ENCODE measurements at regions of chr10 and their contacts with region 1.

Region 1: DNA sequence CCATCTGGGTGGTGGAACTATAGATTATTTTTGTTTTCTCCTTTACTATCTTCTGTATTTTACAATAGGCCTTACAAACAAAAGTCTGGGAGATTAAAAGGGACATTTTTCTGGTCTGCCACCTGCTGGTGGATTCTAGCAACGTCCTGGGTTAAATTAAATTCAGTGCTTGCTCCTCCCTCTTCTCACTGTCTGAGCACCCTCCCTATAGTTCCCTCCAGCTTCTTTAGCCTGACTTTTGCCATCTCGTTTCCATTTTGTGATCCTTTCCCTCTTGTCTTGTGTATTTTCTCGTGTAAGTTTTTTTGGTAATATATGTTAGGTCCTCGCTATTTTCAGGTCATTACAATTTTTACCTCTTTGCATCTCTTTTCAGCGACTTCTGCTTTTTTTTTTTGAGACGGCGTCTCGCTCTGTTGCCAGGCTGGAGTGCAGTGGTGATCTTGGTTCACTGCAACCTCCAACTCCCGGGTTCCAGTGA is 16.1 kb downstream of the ANKRD16 start:
- DNase-seq: peak in 1 of 3 donors; percentile 64
- ATAC-seq: peak; percentile 94 to 99 (median 97)
- H3K4me3 ChIP-seq: no peak overlapping the region
- H3K27ac ChIP-seq: no peak overlapping the region
- H3K4me1 ChIP-seq: no peaks in the 10 kb centered on the region
- H3K27me3 ChIP-seq: no peaks in the 10 kb centered on the region
- CTCF ChIP-seq: peak; percentile 74 to 79 (median 76)
- POLR2A ChIP-seq: no peak

Region 2: DNA sequence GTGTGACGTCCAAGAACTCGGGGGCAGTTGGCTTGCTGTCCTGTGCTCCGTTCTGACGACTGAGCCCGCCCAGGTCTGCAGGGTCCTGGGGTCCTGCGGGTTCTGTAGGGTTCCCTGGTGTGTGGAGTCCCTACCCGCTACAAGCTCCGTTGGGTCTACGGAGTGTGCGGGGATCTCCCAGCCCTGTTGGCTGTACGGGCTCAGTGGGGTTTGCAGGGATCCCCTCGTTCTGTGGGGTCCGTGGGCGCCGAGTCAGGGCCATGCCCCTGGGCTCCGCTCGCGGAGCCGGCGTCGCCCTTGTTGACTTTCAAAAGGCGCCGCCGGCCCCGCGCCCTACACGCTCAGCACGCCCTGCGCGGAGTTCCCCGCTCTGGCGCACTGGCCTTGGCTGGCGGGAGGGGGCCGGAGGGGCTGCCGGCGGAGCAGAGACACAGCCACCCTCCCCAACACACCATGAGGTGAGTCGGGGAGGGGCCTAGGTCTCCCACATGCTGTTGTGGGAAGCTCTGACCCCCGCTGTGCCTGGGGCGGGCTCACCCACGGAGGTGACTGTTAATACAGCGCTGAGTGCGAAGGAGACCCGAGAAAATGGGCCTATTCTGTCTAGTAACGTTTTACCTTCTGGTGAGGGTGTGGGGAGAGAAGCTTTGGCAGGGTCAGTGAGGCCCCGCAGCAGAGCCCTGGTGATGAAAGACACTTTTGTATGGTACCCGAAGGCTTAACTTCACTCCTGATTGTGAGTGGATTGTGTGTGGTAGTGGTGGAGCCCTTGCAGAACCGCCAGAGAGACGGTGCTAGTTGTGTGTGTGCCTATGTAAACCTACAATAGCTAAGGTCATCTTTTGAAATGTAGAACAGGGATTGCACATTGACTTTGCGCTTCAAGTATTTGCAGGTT is 180.8 kb before region 1 on chr10:
- intact Hi-C with region 1: loop called in 1 of 2 experiments (anchors 10 kb)
- DNase-seq: peak; percentile 67 to 74 (median 70)
- ATAC-seq: peak; percentile 92 to 96 (median 94)
- H3K4me3 ChIP-seq: peak overlapping the region; percentile 40 to 52 (median 41)
- H3K27ac ChIP-seq: peak overlapping the region; percentile 31 to 77 (median 32)
- H3K4me1 ChIP-seq: peaks cover 0 to 26% (median 2%) of the 10 kb centered on the region in 4 donors
- H3K27me3 ChIP-seq: no peaks in the 10 kb centered on the region
- CTCF ChIP-seq: no peak
- POLR2A ChIP-seq: peak; percentile 37

Region 3: DNA sequence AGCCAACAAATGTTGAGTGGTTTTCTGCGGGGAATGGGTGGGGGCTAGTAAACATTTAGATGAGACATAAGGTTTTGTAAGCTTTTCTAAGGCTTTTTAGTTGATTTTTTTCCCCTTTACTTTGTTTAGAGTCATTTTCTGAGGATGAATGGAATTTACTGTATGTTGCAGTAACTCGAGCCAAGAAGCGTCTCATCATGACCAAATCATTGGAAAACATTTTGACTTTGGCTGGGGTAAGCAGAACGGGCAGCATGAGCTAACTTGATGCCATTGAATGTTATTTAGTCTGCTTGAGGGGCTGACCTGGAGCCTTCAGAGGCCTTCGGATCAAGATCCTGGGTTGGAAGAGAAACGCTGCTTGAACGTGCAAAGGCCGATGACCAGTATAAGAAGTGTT is 53.8 kb after region 1 on chr10:
- intact Hi-C with region 1: no loop called
- DNase-seq: no peak
- ATAC-seq: no peak
- H3K4me3 ChIP-seq: no peak overlapping the region
- H3K27ac ChIP-seq: no peak overlapping the region
- H3K4me1 ChIP-seq: peaks cover 0 to 32% (median 13%) of the 10 kb centered on the region in 4 donors
- H3K27me3 ChIP-seq: no peaks in the 10 kb centered on the region
- CTCF ChIP-seq: no peak
- POLR2A ChIP-seq: no peak